PC-9 (cell line): ENCODE measurements at regions of chr20 and their contacts with region 1.

Region 1: DNA sequence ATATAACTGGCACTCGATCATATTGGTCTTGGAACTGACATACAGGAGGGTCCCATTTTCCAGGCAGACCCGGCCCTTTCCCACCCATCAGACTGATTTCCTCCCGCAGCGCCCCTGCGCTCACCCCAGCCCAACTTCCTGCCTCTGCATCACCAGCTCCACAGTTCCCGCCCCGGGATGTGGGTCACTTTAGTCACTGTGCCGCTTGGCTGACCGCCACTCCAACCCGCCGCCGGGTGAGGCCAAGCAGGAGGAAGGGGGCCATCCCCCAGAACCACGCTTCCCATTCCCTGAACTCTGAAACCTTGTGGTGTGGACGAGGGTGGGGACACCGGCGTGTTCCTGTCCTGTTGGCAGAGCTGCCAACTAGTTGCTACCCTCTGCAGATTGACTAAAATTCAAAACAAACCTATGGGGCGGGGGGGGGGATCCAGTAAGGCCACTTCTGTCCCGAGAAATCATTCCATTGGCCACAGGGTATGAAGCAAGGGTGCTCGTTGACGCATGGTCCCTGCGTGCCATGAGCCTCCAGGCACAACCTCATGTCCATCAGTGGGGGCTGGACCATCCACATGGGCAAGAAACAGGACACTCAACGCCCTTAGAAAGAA is 12.3 kb downstream of the TGM2 start:
- DNase-seq: peak; percentile 90 to 98
- H3K4me3 ChIP-seq: no peak overlapping the region
- H3K27ac ChIP-seq: peak overlapping the region; percentile 55
- H3K4me1 ChIP-seq: peaks cover 51% of the 10 kb centered on the region
- H3K27me3 ChIP-seq: no peaks in the 10 kb centered on the region
- CTCF ChIP-seq: no peak

Region 2: GRCh38 chr20:38109591-38110524 is 42.9 kb before region 1 on chr20:
- CTCF ChIA-PET with region 1: interaction called, 3 read pairs
- POLR2A ChIA-PET with region 1: no interaction called
- intact Hi-C with region 1: loop called (anchors 2 kb)
- DNase-seq: peak; percentile 87 to 99
- H3K4me3 ChIP-seq: no peak overlapping the region; the same call in 1 of the 2 replicates
- H3K27ac ChIP-seq: peak overlapping the region; percentile 92
- H3K4me1 ChIP-seq: peaks cover 58% of the 10 kb centered on the region
- H3K27me3 ChIP-seq: no peaks in the 10 kb centered on the region
- CTCF ChIP-seq: no peak

Region 3: DNA sequence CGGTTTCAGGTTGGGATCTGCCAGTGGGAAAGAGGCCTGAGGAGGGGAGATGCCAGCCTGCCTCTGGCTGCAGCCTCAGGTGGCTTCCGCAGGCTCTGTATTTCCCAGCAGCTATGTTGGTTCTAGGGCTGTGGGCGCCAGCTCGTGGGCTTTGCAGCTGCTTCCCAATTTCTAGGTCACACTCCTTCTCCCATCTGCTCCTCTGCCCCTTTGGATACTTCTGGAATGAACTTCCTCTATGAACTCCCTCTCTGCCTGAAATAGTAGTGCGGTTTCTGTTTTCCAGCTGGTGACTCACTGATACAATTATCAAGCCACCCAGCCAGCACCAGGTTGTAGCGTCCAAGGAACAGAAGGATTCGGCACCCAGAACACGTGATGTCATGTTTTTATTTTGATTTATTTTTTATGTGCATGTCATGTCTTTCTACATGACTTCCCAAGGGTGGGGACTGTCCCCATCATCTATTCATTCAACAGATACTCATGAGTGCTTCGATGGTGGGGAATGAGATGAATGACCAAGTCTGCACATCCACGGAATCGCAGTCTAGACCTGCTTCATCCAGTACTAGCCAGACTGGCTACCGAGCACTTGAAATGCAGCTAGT is 25.6 kb before region 1 on chr20:
- CTCF ChIA-PET with region 1: no interaction called
- POLR2A ChIA-PET with region 1: no interaction called
- intact Hi-C with region 1: loop called (anchors 2 kb)
- DNase-seq: peak; percentile 69 to 89
- H3K4me3 ChIP-seq: no peak overlapping the region
- H3K27ac ChIP-seq: peak overlapping the region; percentile 97
- H3K4me1 ChIP-seq: peaks cover 78% of the 10 kb centered on the region
- H3K27me3 ChIP-seq: no peaks in the 10 kb centered on the region
- CTCF ChIP-seq: no peak

Region 4: GRCh38 chr20:38187512-38187911 is 34.8 kb after region 1 on chr20:
- CTCF ChIA-PET with region 1: no interaction called
- POLR2A ChIA-PET with region 1: no interaction called
- intact Hi-C with region 1: loop called (anchors 1 kb)
- DNase-seq: no peak
- H3K4me3 ChIP-seq: no peak overlapping the region
- H3K27ac ChIP-seq: peak overlapping the region; percentile 86
- H3K4me1 ChIP-seq: peaks cover 64% of the 10 kb centered on the region
- H3K27me3 ChIP-seq: no peaks in the 10 kb centered on the region
- CTCF ChIP-seq: no peak